H1 (cell line): ENCODE measurements at regions of chr3 and their contacts with region 1.

Region 1: GRCh38 chr3:127959846-127960245 is 44.8 kb downstream of the KBTBD12 start:
- DNase-seq: peak in 1 of 2 experiments; percentile 59
- H3K4me3 ChIP-seq: no peak overlapping the region
- H3K27ac ChIP-seq: no peak overlapping the region
- H3K4me1 ChIP-seq: no peaks in the 10 kb centered on the region; a peak in 1 of 7 replicates
- H3K27me3 ChIP-seq: no peaks in the 10 kb centered on the region
- CTCF ChIP-seq: peak; percentile 71 to 81 (median 76)
- EP300 ChIP-seq: no peak
- POLR2A ChIP-seq: no peak
- RAD21 ChIP-seq: peak; percentile 81 to 87

Region 2: GRCh38 chr3:127889461-127889863 is 70.4 kb before region 1 on chr3:
- CTCF ChIA-PET with region 1: interaction called, 13 read pairs
- POLR2A ChIA-PET with region 1: no interaction called
- DNase-seq: no peak
- H3K4me3 ChIP-seq: no peak overlapping the region
- H3K27ac ChIP-seq: no peak overlapping the region
- H3K4me1 ChIP-seq: peaks cover 0 to 5% (median 1%) of the 10 kb centered on the region in 4 experiments; a peak in 3 of 7 replicates
- H3K27me3 ChIP-seq: no peaks in the 10 kb centered on the region; a peak in 1 of 7 replicates
- CTCF ChIP-seq: no peak
- EP300 ChIP-seq: no peak
- POLR2A ChIP-seq: no peak
- RAD21 ChIP-seq: no peak

Region 3: GRCh38 chr3:127949446-127950055 is 10.3 kb before region 1 on chr3:
- CTCF ChIA-PET with region 1: interaction called, 10 read pairs
- POLR2A ChIA-PET with region 1: no interaction called
- DNase-seq: no peak
- H3K4me3 ChIP-seq: no peak overlapping the region
- H3K27ac ChIP-seq: no peak overlapping the region
- H3K4me1 ChIP-seq: no peaks in the 10 kb centered on the region
- H3K27me3 ChIP-seq: no peaks in the 10 kb centered on the region; a peak in 1 of 7 replicates
- CTCF ChIP-seq: no peak
- EP300 ChIP-seq: no peak
- POLR2A ChIP-seq: no peak
- RAD21 ChIP-seq: no peak

Region 4: GRCh38 chr3:127970966-127971592 is 11.2 kb after region 1 on chr3:
- CTCF ChIA-PET with region 1: interaction called, 19 read pairs
- POLR2A ChIA-PET with region 1: no interaction called
- DNase-seq: no peak
- H3K4me3 ChIP-seq: no peak overlapping the region
- H3K27ac ChIP-seq: no peak overlapping the region
- H3K4me1 ChIP-seq: no peaks in the 10 kb centered on the region
- H3K27me3 ChIP-seq: peaks cover 0 to 1% (median 0%) of the 10 kb centered on the region in 4 experiments; a peak in 2 of 7 replicates
- CTCF ChIP-seq: peak in 2 of 3 experiments; percentile 76 to 87; a peak in 3 of 4 replicates
- EP300 ChIP-seq: no peak
- POLR2A ChIP-seq: no peak
- RAD21 ChIP-seq: peak; percentile 79 to 85